Caco-2 (cell line): ENCODE measurements at regions of chr17 and their contacts with region 1.

Region 1: GRCh38 chr17:2975469-2975958 is 87.9 kb downstream of the OR1D5 start:
- DNase-seq: peak; percentile 80 to 82
- H3K4me3 ChIP-seq: peak overlapping the region; percentile 71
- H3K4me3 Mint-ChIP-seq: peak overlapping the region; percentile 74
- H3K27ac Mint-ChIP-seq: peak overlapping the region; percentile 36
- H3K4me1 ChIP-seq: peaks cover 9% of the 10 kb centered on the region; the same call in 1 of the 2 replicates
- H3K4me1 Mint-ChIP-seq: no peaks in the 10 kb centered on the region
- H3K27me3 ChIP-seq: no peaks in the 10 kb centered on the region
- H3K27me3 Mint-ChIP-seq: no peaks in the 10 kb centered on the region
- CTCF ChIP-seq: no peak

Region 2: DNA sequence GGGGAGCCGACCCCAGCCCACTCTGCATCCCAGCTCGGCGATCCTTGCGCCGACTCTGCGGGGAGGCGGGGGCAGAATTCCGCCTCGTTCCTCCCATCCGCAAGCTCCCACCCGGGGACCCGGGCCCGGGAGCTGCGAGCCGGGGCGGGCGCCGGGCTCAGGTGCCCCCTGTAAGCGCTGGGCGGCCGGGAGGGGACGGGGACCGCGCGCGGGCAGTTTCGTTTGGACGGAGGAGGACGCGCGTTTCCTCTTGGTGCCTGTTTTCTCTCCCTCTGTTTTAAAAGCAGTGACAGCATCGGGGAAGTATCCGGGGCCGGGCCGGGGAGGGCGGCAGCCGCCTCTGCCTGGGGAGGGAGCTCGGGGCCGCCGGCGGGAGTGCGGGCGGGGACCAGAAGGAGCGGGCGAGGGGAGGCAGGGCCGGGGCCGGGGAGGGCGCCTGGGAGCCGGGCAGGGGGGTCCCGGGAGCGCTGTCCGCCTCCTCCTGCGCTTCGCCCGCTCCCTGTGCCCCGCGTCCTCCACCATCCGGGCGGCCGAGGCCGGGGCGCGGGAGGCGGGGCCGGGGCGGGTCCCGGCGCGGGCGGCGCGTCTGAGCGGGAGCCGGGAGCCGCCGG is 122.3 kb before region 1 on chr17:
- CTCF ChIA-PET with region 1: no interaction called
- POLR2A ChIA-PET with region 1: interaction called, 11 read pairs
- intact Hi-C with region 1: no loop called
- DNase-seq: peak in 1 of 2 experiments; percentile 55
- H3K4me3 ChIP-seq: peak overlapping the region; percentile 81
- H3K4me3 Mint-ChIP-seq: peak overlapping the region; percentile 89
- H3K27ac Mint-ChIP-seq: no peak overlapping the region
- H3K4me1 ChIP-seq: peaks cover 30% of the 10 kb centered on the region
- H3K4me1 Mint-ChIP-seq: peaks cover 7% of the 10 kb centered on the region
- H3K27me3 ChIP-seq: no peaks in the 10 kb centered on the region
- H3K27me3 Mint-ChIP-seq: no peaks in the 10 kb centered on the region
- CTCF ChIP-seq: no peak